Activated T-helper 2 cell treated with anti-CD3 and anti-CD28 coated beads, Interferon-gamma antibody, Interleukin-2, Interleukin-4, amounts not matched to agents 10 μg/mL and 5 μg/mL and 100 μg/mL, durations not matched to agents 14 hours and 24 hours and 36 hours (primary cell): ENCODE measurements at regions of chr3 and their contacts with region 1.

Region 1: GRCh38 chr3:158790901-158791589 is 10.8 kb upstream of the MFSD1 start:
- DNase-seq: no peak
- H3K4me3 Mint-ChIP-seq: peak overlapping the region; percentile 75
- H3K27ac Mint-ChIP-seq: peak overlapping the region; percentile 69
- H3K4me1 Mint-ChIP-seq: peaks cover 3% of the 10 kb centered on the region
- H3K27me3 Mint-ChIP-seq: peaks cover 9% of the 10 kb centered on the region

Region 2: DNA sequence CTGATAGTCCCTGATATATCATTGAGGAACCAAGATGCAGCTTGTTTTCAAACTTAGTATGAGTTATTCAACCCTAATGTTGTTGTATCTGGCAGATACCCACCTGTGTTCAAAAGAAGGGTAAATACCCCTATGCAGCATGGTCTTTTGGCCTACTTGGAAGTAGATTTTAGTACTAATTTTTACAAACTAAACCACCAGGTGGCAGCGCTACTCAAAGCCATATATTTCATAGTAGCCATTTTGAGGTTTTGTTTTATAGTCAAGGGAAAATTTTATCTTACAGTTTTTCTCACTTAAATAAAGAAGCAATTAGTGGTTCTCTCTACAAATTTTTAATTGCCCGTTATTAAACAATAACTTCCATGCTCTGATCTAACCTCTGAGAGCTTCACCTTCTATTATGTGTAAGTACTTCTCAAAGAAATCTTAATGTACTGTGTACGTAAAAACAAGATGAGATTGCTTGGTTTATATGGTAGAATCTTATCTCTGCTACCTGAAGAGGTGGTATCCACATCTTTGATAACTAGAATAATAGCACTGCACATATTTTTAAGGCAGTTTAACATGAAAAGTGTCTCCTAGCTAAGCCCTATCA is 251.5 kb before region 1 on chr3:
- intact Hi-C with region 1: loop called (anchors 1 kb)
- DNase-seq: no peak
- H3K4me3 Mint-ChIP-seq: no peak overlapping the region
- H3K27ac Mint-ChIP-seq: no peak overlapping the region
- H3K4me1 Mint-ChIP-seq: no peaks in the 10 kb centered on the region
- H3K27me3 Mint-ChIP-seq: no peaks in the 10 kb centered on the region

Region 3: DNA sequence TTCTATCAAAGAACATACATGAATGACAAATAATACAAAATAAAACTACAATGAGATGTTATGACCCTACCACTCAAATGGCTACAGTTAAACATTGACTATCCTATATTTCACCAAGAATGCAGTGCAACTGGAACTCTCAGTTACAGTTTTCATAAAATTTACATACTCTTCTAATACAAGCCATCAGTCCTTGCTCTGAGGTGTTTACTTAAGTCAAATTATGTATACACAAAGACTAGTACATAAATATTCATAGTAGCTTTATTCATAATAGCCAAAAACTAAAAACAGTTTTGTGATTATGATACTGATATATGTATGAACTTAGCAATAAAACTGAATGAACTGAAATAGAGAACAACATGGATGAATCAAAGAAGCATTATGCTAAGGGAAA is 200.8 kb before region 1 on chr3:
- intact Hi-C with region 1: no loop called
- DNase-seq: no peak
- H3K4me3 Mint-ChIP-seq: no peak overlapping the region
- H3K27ac Mint-ChIP-seq: no peak overlapping the region
- H3K4me1 Mint-ChIP-seq: no peaks in the 10 kb centered on the region
- H3K27me3 Mint-ChIP-seq: peaks cover 6% of the 10 kb centered on the region

Region 4: GRCh38 chr3:158659454-158660237 is 131.4 kb before region 1 on chr3:
- intact Hi-C with region 1: loop called (anchors 1 kb)
- DNase-seq: peak; percentile 38
- H3K4me3 Mint-ChIP-seq: no peak overlapping the region
- H3K27ac Mint-ChIP-seq: peak overlapping the region; percentile 55
- H3K4me1 Mint-ChIP-seq: peaks cover 9% of the 10 kb centered on the region
- H3K27me3 Mint-ChIP-seq: no peaks in the 10 kb centered on the region

Region 5: GRCh38 chr3:158727206-158728060 is 63.6 kb before region 1 on chr3:
- intact Hi-C with region 1: loop called (anchors 1 kb)
- DNase-seq: peak; percentile 31
- H3K4me3 Mint-ChIP-seq: peak overlapping the region; percentile 61
- H3K27ac Mint-ChIP-seq: peak overlapping the region; percentile 61
- H3K4me1 Mint-ChIP-seq: peaks cover 44% of the 10 kb centered on the region
- H3K27me3 Mint-ChIP-seq: no peaks in the 10 kb centered on the region

Region 6: GRCh38 chr3:159252772-159253384 is 461.8 kb after region 1 on chr3:
- intact Hi-C with region 1: loop called (anchors 5 kb)
- DNase-seq: no peak
- H3K4me3 Mint-ChIP-seq: no peak overlapping the region
- H3K27ac Mint-ChIP-seq: no peak overlapping the region
- H3K4me1 Mint-ChIP-seq: no peaks in the 10 kb centered on the region
- H3K27me3 Mint-ChIP-seq: no peaks in the 10 kb centered on the region